GM12878 (cell line): ENCODE measurements at regions of chr10 and their contacts with region 1.

Region 1: GRCh38 chr10:110803830-110804338 is 67.8 kb upstream of the PDCD4 start:
- DNase-seq: peak; percentile 47
- ATAC-seq: peak; percentile 85
- H3K4me3 ChIP-seq: no peak overlapping the region
- H3K27ac ChIP-seq: peak overlapping the region; percentile 91
- H3K4me1 ChIP-seq: peaks cover 33% of the 10 kb centered on the region
- H3K27me3 ChIP-seq: no peaks in the 10 kb centered on the region
- CTCF ChIP-seq: peak; percentile 76 to 83 (median 81)
- EP300 ChIP-seq: no peak
- POLR2A ChIP-seq: peak; percentile 25; the same call in 1 of the 2 replicates
- RAD21 ChIP-seq: peak; percentile 90

Region 2: DNA sequence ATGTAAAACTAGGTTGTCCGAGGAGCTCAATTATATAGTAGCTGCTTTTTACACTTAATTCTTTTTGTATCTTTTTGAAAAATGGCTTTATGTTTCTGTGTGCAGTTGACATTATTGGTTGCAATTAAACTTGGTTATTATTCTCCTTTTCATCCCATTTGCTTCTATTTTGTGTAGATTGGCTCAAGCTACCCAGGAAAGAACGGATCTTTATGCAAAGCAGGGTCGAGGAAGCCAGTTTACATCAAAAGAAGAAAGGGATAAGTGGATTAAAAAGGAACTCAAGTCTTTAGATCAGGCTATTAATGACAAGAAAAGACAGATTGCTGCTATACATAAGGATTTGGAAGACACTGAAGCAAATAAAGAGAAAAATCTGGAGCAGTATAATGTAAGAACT is 219.9 kb before region 1 on chr10:
- CTCF ChIA-PET with region 1: no interaction called
- POLR2A ChIA-PET with region 1: no interaction called
- RAD21 ChIA-PET with region 1: no interaction called
- SMC1A ChIA-PET with region 1: no interaction called
- in situ Hi-C with region 1: no loop called
- intact Hi-C with region 1: no loop called
- DNase-seq: no peak
- ATAC-seq: no peak
- H3K4me3 ChIP-seq: no peak overlapping the region
- H3K27ac ChIP-seq: no peak overlapping the region
- H3K4me1 ChIP-seq: no peaks in the 10 kb centered on the region
- H3K27me3 ChIP-seq: no peaks in the 10 kb centered on the region
- CTCF ChIP-seq: no peak
- EP300 ChIP-seq: no peak
- POLR2A ChIP-seq: no peak
- RAD21 ChIP-seq: no peak

Region 3: GRCh38 chr10:110758898-110759297 is 45.0 kb before region 1 on chr10:
- CTCF ChIA-PET with region 1: interaction called, 9 read pairs
- POLR2A ChIA-PET with region 1: no interaction called
- RAD21 ChIA-PET with region 1: interaction called, 9 read pairs
- SMC1A ChIA-PET with region 1: interaction called, 13 read pairs
- in situ Hi-C with region 1: no loop called
- intact Hi-C with region 1: no loop called
- DNase-seq: no peak
- ATAC-seq: no peak
- H3K4me3 ChIP-seq: no peak overlapping the region
- H3K27ac ChIP-seq: no peak overlapping the region
- H3K4me1 ChIP-seq: peaks cover 7% of the 10 kb centered on the region
- H3K27me3 ChIP-seq: no peaks in the 10 kb centered on the region
- CTCF ChIP-seq: no peak
- EP300 ChIP-seq: no peak
- POLR2A ChIP-seq: no peak
- RAD21 ChIP-seq: no peak

Region 4: GRCh38 chr10:110827410-110827809 is 23.5 kb after region 1 on chr10:
- CTCF ChIA-PET with region 1: interaction called, 9 read pairs
- POLR2A ChIA-PET with region 1: interaction called, 3 read pairs
- RAD21 ChIA-PET with region 1: interaction called, 5 read pairs
- SMC1A ChIA-PET with region 1: interaction called, 18 read pairs
- in situ Hi-C with region 1: no loop called
- intact Hi-C with region 1: no loop called
- DNase-seq: no peak
- ATAC-seq: no peak
- H3K4me3 ChIP-seq: no peak overlapping the region
- H3K27ac ChIP-seq: no peak overlapping the region
- H3K4me1 ChIP-seq: peaks cover 3% of the 10 kb centered on the region; the same call in 1 of the 2 replicates
- H3K27me3 ChIP-seq: no peaks in the 10 kb centered on the region
- CTCF ChIP-seq: no peak
- EP300 ChIP-seq: no peak
- POLR2A ChIP-seq: no peak
- RAD21 ChIP-seq: no peak

Region 5: GRCh38 chr10:110857265-110858158 is 53.6 kb after region 1 on chr10:
- CTCF ChIA-PET with region 1: interaction called, 52 read pairs
- POLR2A ChIA-PET with region 1: interaction called, 30 read pairs
- RAD21 ChIA-PET with region 1: interaction called, 57 read pairs
- SMC1A ChIA-PET with region 1: interaction called, 64 read pairs
- in situ Hi-C with region 1: no loop called
- intact Hi-C with region 1: no loop called
- DNase-seq: peak; percentile 78
- ATAC-seq: peak; percentile 39
- H3K4me3 ChIP-seq: no peak overlapping the region
- H3K27ac ChIP-seq: peak overlapping the region; percentile 98
- H3K4me1 ChIP-seq: peaks cover 67% of the 10 kb centered on the region
- H3K27me3 ChIP-seq: no peaks in the 10 kb centered on the region
- CTCF ChIP-seq: no peak
- EP300 ChIP-seq: no peak
- POLR2A ChIP-seq: no peak
- RAD21 ChIP-seq: no peak

Region 6: GRCh38 chr10:110893559-110894179 is 89.8 kb after region 1 on chr10:
- CTCF ChIA-PET with region 1: interaction called, 196 read pairs
- POLR2A ChIA-PET with region 1: interaction called, 9 read pairs
- RAD21 ChIA-PET with region 1: interaction called, 115 read pairs
- SMC1A ChIA-PET with region 1: interaction called, 221 read pairs
- in situ Hi-C with region 1: no loop called
- intact Hi-C with region 1: loop called (anchors 1 kb)
- DNase-seq: no peak
- ATAC-seq: peak; percentile 93
- H3K4me3 ChIP-seq: no peak overlapping the region
- H3K27ac ChIP-seq: no peak overlapping the region
- H3K4me1 ChIP-seq: no peaks in the 10 kb centered on the region
- H3K27me3 ChIP-seq: no peaks in the 10 kb centered on the region
- CTCF ChIP-seq: peak; percentile 34 to 52 (median 44); a peak in 4 of 6 replicates
- EP300 ChIP-seq: no peak
- POLR2A ChIP-seq: no peak
- RAD21 ChIP-seq: peak; percentile 66

Region 7: GRCh38 chr10:110923856-110924493 is 120.1 kb after region 1 on chr10:
- CTCF ChIA-PET with region 1: interaction called, 27 read pairs
- POLR2A ChIA-PET with region 1: interaction called, 14 read pairs
- RAD21 ChIA-PET with region 1: interaction called, 33 read pairs
- SMC1A ChIA-PET with region 1: interaction called, 48 read pairs
- in situ Hi-C with region 1: no loop called
- intact Hi-C with region 1: no loop called
- DNase-seq: no peak
- ATAC-seq: peak; percentile 19
- H3K4me3 ChIP-seq: peak overlapping the region; percentile 51
- H3K27ac ChIP-seq: peak overlapping the region; percentile 64
- H3K4me1 ChIP-seq: peaks cover 29% of the 10 kb centered on the region
- H3K27me3 ChIP-seq: no peaks in the 10 kb centered on the region
- CTCF ChIP-seq: no peak
- EP300 ChIP-seq: 0 out of 4 replicates have a peak, but pooled peaks of 1 of the 2 experiments have one; percentile 55
- POLR2A ChIP-seq: no peak
- RAD21 ChIP-seq: no peak

Region 8: DNA sequence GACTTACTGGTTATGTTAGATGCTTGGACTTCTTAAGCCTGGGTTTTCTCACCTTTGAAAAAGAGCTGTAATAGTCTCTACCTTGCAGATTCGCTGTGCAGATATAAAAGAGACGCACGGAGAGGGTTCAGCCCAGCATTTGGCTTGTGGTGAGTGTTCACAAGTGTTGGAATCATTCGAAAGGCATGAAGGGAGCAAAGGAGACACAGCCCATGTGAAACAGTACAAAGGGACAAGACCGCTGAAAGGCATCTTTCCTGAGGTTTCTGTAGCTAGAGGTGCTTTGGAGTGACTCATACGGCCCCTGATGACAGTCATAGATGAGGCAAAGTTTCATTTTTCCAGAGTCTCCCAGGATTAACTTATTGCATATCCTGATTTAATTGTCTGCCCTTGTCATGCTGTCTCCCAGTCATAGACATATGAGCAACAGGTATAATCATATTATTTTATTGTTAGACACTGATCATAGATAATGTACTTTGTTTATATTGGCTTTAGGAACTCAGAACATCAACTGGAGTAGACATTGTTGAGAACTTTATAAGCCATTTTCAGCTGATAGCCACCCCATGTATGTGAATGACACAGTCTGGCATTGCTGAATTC is 444.0 kb after region 1 on chr10:
- CTCF ChIA-PET with region 1: no interaction called
- POLR2A ChIA-PET with region 1: no interaction called
- RAD21 ChIA-PET with region 1: no interaction called
- SMC1A ChIA-PET with region 1: no interaction called
- in situ Hi-C with region 1: no loop called
- intact Hi-C with region 1: no loop called
- DNase-seq: no peak
- ATAC-seq: no peak
- H3K4me3 ChIP-seq: no peak overlapping the region
- H3K27ac ChIP-seq: no peak overlapping the region
- H3K4me1 ChIP-seq: no peaks in the 10 kb centered on the region
- H3K27me3 ChIP-seq: no peaks in the 10 kb centered on the region; a peak in 1 of 4 replicates
- CTCF ChIP-seq: no peak
- EP300 ChIP-seq: no peak
- POLR2A ChIP-seq: no peak
- RAD21 ChIP-seq: no peak